Psoas muscle (tissue), 8 donors: ENCODE measurements at regions of chr1 and their contacts with region 1.

Region 1: DNA sequence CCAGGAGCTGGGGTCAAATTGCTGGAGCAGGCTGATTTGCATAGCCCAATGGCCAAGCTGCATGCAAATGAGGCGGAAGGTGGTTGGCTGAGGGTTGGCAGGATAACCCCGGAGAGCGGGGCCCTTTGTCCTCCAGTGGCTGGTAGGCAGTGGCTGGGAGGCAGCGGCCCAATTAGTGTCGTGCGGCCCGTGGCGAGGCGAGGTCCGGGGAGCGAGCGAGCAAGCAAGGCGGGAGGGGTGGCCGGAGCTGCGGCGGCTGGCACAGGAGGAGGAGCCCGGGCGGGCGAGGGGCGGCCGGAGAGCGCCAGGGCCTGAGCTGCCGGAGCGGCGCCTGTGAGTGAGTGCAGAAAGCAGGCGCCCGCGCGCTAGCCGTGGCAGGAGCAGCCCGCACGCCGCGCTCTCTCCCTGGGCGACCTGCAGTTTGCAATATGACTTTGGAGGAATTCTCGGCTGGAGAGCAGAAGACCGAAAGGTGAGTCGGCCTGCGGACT is at the start of gene GADD45A:
- DNase-seq: peak; percentile 98 to 99
- ATAC-seq: peak; percentile 80 to 86 (median 85)
- H3K4me3 ChIP-seq: peak within 1 kb of the TSS; percentile 88
- H3K27ac ChIP-seq: peak within 1 kb of the TSS; percentile 96
- H3K4me1 ChIP-seq: peaks cover 20% of the 10 kb centered on the region
- H3K27me3 ChIP-seq: no peaks in the 10 kb centered on the region
- CTCF ChIP-seq: no peak
- total RNA-seq, gene GADD45A: 93.5 to 505 (median 230) TPM

Region 2: GRCh38 chr1:67561704-67562113 is 123.4 kb before region 1 on chr1:
- intact Hi-C with region 1: loop called (anchors 1 to 5 kb)
- DNase-seq: peak; percentile 93 to 97
- ATAC-seq: peak; percentile 94 to 97 (median 94)
- H3K4me3 ChIP-seq: peak overlapping the region; percentile 38
- H3K27ac ChIP-seq: peak overlapping the region; percentile 92
- H3K4me1 ChIP-seq: peaks cover 42% of the 10 kb centered on the region
- H3K27me3 ChIP-seq: no peaks in the 10 kb centered on the region
- CTCF ChIP-seq: peak; percentile 93

Region 3: GRCh38 chr1:67578397-67579020 is 106.6 kb before region 1 on chr1:
- intact Hi-C with region 1: no loop called
- DNase-seq: no peak
- ATAC-seq: no peak
- H3K4me3 ChIP-seq: no peak overlapping the region
- H3K27ac ChIP-seq: no peak overlapping the region
- H3K4me1 ChIP-seq: peaks cover 27% of the 10 kb centered on the region
- H3K27me3 ChIP-seq: no peaks in the 10 kb centered on the region
- CTCF ChIP-seq: no peak

Region 4: GRCh38 chr1:67646145-67647035 is 38.7 kb before region 1 on chr1:
- intact Hi-C with region 1: loop called in 1 of 2 experiments (anchors 5 kb)
- DNase-seq: peak; percentile 21 to 59
- ATAC-seq: peak; percentile 35 to 61 (median 52)
- H3K4me3 ChIP-seq: no peak overlapping the region
- H3K27ac ChIP-seq: peak overlapping the region; percentile 73
- H3K4me1 ChIP-seq: peaks cover 26% of the 10 kb centered on the region
- H3K27me3 ChIP-seq: no peaks in the 10 kb centered on the region
- CTCF ChIP-seq: no peak

Region 5: DNA sequence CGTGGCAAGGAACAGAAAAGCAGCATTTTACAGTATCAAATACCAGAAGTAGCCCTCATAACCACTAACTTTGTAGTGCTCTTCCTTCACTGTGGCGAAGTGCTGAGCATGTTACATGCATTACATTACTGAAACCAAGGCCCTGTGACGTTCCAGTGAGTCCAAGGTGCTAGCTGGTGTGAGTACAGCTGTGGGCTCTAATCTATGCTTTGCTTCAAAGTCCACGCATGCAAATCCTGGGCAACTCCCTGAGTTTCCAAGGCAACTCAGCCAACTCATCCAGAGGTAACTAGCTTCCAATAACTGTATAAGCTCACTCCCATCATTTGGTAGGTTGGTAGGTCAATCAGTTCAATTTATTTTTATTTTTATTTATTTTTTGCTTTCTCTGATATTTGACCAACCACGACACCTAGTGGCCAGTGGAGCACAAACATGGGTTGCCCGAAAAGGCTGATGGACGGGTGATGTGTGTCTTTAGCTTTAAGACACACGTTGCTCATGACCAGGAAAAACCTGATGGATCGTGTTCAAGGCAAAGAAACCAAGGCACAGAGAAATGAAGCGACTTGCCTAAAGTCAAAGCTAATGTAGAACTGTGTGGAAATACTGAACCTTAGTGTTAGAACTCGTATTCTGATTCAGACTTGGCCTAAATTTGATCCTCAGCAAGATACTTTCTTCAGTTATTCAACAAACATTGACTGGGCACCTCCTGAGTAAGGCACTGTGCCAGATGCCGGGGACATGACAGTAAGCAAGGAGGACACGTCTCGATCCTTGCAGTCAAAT is 75.1 kb after region 1 on chr1:
- intact Hi-C with region 1: loop called (anchors 5 kb)
- DNase-seq: peak; percentile 41 to 62
- ATAC-seq: peak; percentile 84 to 91 (median 86)
- H3K4me3 ChIP-seq: no peak overlapping the region
- H3K27ac ChIP-seq: peak overlapping the region; percentile 66
- H3K4me1 ChIP-seq: peaks cover 21% of the 10 kb centered on the region
- H3K27me3 ChIP-seq: no peaks in the 10 kb centered on the region
- CTCF ChIP-seq: peak; percentile 90